ENCODE measurements at regions of chr4 and their contacts with region 1.

Region 1: GRCh38 chr4:91621446-91621845 is 682.3 kb upstream of the GRID2 start:
- DNase-seq: no peak

Region 2: DNA sequence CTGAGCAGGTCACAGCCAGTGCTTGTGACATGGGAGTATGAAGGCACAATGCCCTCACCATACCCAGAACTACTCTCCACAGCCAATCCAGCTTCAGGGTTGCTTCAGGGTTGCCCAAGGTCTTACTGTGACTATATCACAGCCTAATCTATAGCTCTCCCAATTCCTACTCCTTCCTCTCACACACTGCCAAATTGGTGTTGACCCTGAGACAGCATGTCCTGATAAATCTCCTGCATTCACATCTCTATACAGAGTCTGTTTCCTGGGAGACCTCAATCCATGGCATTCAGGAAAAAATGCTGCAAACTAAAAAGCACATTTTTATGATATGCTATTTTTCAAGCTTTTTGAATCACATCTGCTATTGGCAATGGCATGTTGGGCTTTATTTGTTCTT is 1139.0 kb after region 1 on chr4:
- intact Hi-C with region 1: loop called in 1 of 2 experiments (anchors 5 kb)
- DNase-seq: no peak

Measured in posterior vena cava (tissue), 2 donors.